CD4-positive, alpha-beta T cell (primary cell): ENCODE measurements at regions of chr7 and their contacts with region 1.

Region 1: DNA sequence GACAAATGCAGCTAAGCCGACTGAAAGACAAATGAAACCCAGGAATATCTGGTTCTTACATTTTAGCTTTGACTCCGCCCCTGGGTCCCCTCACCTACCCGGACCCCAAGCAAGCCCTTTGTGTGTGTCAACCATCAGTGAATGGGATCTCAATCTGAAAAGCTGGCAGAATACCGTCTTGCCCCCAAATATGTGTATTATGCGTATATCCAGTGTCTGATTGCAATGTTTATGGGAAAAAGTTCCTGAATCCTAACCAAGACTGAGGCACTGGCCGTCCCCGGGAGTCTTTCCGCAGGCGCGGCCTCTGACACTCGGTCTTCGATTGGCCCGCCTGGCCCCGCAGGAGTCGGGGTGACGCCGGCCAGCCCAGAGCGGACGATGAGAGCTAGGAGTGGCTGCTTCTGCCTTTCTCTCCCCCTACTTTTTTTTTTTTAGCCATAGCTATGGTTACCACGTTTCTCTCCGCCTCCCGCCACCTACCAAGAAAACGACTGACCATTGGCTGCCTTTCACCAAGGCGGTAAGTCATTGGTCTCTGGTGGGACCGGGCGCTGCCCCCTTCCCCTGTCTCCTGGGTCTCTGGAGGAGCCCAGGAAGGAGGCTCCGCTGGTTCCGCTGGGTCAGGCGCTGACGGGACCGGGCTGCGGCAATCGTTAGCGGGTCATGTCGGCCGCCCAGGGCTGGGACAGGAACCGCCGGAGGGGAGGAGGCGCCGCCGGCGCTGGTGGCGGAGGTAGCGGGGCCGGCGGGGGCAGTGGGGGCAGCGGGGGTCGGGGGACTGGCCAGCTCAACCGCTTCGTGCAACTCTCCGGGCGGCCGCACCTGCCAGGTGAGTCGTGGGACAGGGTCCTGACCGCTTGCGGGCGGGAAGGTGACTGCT is at the start of gene KLHDC10:
- DNase-seq: peak; percentile 90 to 99 (median 94)
- ATAC-seq: peak; percentile 94
- H3K4me3 ChIP-seq: peak within 1 kb of the TSS; percentile 82
- H3K4me3 Mint-ChIP-seq: peak within 1 kb of the TSS; percentile 96
- H3K27ac ChIP-seq: peak within 1 kb of the TSS; percentile 62 to 81
- H3K27ac Mint-ChIP-seq: peak within 1 kb of the TSS; percentile 86
- H3K4me1 ChIP-seq: peaks cover 22% of the 10 kb centered on the region
- H3K4me1 Mint-ChIP-seq: peaks cover 48% of the 10 kb centered on the region
- H3K27me3 ChIP-seq: no peaks in the 10 kb centered on the region
- H3K27me3 Mint-ChIP-seq: no peaks in the 10 kb centered on the region
- CTCF ChIP-seq: no peak
- total RNA-seq, gene KLHDC10: 7.0 to 8.8 TPM

Region 2: DNA sequence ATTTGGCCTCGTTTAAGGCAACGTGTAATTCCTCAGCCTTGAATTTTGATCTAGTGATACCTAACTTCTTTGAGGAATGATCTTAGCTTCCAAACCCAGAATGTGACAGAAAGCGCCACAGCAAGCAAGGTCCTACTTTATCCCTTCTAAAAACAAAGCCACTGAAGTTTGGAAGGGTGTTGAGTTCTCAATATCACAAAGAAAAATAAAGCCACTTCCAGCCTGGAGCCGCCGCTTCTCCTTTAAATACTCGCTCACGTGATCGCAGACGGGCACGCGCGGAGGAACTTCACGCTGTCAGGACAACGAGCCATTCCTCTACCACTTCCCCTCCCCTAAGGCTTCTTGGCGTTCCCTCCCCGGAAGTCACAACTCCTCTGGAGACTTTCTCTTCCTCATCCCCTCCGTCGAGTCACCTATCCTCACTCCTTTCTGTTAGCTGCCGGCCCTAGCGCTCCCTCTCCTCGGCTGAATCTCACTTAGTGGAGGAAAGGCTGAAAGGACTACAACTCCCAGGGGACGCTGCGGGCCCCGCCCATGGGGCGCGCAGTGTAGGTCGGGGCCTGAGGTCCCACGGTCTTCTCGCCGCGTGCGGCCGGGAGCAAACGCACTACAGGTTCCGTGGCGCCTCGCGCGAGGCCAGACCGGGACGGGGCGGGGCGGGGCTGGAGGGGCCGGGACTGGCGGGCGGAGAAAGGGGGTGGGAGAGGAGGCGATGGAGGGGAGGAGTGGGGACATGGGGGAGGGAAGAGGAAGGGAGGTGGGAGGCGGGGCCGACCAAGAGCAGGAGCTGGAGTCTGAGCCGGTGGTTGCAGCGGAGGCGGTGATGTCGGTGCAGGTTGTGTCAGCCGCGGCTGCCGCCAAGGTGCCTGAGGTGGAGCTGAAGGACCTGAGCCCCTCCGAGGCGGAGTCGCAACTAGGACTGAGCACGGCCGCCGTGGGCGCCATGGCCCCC is 845.7 kb before region 1 on chr7 and contains the start of gene AHCYL2:
- CTCF ChIA-PET with region 1: no interaction called
- POLR2A ChIA-PET with region 1: no interaction called
- intact Hi-C with region 1: loop called in 1 of 2 experiments (anchors 5 kb)
- DNase-seq: peak; percentile 96 to 99 (median 98)
- ATAC-seq: peak; percentile 89
- H3K4me3 ChIP-seq: peak within 1 kb of the TSS; percentile 91
- H3K4me3 Mint-ChIP-seq: peak within 1 kb of the TSS; percentile 96
- H3K27ac ChIP-seq: peak within 1 kb of the TSS; percentile 72 to 97
- H3K27ac Mint-ChIP-seq: peak within 1 kb of the TSS; percentile 89
- H3K4me1 ChIP-seq: peaks cover 25% of the 10 kb centered on the region
- H3K4me1 Mint-ChIP-seq: peaks cover 56% of the 10 kb centered on the region
- H3K27me3 ChIP-seq: no peaks in the 10 kb centered on the region
- H3K27me3 Mint-ChIP-seq: no peaks in the 10 kb centered on the region
- CTCF ChIP-seq: no peak
- total RNA-seq, gene AHCYL2: 5.8 to 6.0 TPM

Region 3: GRCh38 chr7:130050773-130051125 is 19.5 kb before region 1 on chr7:
- CTCF ChIA-PET with region 1: interaction called, 4 read pairs
- POLR2A ChIA-PET with region 1: interaction called, 14 read pairs
- intact Hi-C with region 1: loop called in 1 of 2 experiments (anchors 1 kb)
- DNase-seq: no peak
- ATAC-seq: no peak
- H3K4me3 ChIP-seq: peak overlapping the region; percentile 85
- H3K4me3 Mint-ChIP-seq: peak overlapping the region; percentile 98
- H3K27ac ChIP-seq: peak overlapping the region; percentile 29 to 45
- H3K27ac Mint-ChIP-seq: peak overlapping the region; percentile 81
- H3K4me1 ChIP-seq: peaks cover 15% of the 10 kb centered on the region
- H3K4me1 Mint-ChIP-seq: peaks cover 10% of the 10 kb centered on the region
- H3K27me3 ChIP-seq: no peaks in the 10 kb centered on the region
- H3K27me3 Mint-ChIP-seq: no peaks in the 10 kb centered on the region
- CTCF ChIP-seq: no peak

Region 4: DNA sequence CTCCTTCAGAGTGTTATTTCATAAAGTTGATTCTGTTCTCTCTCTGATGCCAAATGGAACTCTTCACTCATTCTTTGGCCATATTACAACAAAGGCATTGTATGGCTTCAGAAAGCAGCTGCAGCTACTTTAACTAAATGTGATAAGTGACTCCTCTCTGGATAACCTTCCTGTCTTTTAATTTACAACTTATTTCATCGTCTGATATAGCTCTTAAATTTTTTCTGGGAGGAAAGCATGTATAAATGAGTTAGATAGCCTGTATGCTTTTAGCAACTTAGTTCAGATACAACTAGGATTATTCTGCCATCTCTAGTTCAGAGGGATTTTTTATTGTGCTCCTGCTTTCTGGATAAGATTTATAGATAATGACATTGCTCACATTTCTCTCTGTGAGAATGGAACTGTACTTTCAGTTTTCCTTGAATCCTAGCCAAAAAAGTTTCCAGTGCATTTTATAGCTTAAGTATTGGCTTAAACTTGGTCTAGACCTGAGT is 57.6 kb after region 1 on chr7:
- CTCF ChIA-PET with region 1: no interaction called
- POLR2A ChIA-PET with region 1: no interaction called
- intact Hi-C with region 1: no loop called
- DNase-seq: no peak
- ATAC-seq: no peak
- H3K4me3 ChIP-seq: no peak overlapping the region
- H3K4me3 Mint-ChIP-seq: no peak overlapping the region
- H3K27ac ChIP-seq: no peak overlapping the region
- H3K27ac Mint-ChIP-seq: no peak overlapping the region
- H3K4me1 ChIP-seq: no peaks in the 10 kb centered on the region
- H3K4me1 Mint-ChIP-seq: no peaks in the 10 kb centered on the region
- H3K27me3 ChIP-seq: no peaks in the 10 kb centered on the region
- H3K27me3 Mint-ChIP-seq: no peaks in the 10 kb centered on the region
- CTCF ChIP-seq: no peak

Region 5: DNA sequence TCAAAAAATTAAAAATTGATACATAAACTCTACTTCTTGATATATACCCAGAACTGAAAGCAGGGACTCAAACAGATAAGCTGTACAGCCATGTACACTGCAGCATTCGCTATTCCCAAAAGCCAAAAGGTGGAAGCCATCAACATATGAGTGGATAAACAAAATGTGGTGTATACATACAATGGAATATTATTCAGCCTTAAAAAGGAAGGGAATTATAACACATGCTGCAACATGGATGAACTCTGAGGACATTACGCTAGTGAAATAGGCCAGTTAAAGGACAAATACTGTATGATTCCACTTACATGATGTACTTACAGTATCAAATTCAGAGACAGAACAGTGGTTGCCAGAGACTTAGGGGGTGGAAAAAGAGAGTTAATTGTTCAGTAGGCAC is 126.9 kb after region 1 on chr7:
- CTCF ChIA-PET with region 1: no interaction called
- POLR2A ChIA-PET with region 1: no interaction called
- intact Hi-C with region 1: no loop called
- DNase-seq: no peak
- ATAC-seq: no peak
- H3K4me3 ChIP-seq: no peak overlapping the region
- H3K4me3 Mint-ChIP-seq: no peak overlapping the region
- H3K27ac ChIP-seq: no peak overlapping the region
- H3K27ac Mint-ChIP-seq: no peak overlapping the region
- H3K4me1 ChIP-seq: no peaks in the 10 kb centered on the region
- H3K4me1 Mint-ChIP-seq: peaks cover 21% of the 10 kb centered on the region
- H3K27me3 ChIP-seq: no peaks in the 10 kb centered on the region
- H3K27me3 Mint-ChIP-seq: no peaks in the 10 kb centered on the region
- CTCF ChIP-seq: no peak

Region 6: DNA sequence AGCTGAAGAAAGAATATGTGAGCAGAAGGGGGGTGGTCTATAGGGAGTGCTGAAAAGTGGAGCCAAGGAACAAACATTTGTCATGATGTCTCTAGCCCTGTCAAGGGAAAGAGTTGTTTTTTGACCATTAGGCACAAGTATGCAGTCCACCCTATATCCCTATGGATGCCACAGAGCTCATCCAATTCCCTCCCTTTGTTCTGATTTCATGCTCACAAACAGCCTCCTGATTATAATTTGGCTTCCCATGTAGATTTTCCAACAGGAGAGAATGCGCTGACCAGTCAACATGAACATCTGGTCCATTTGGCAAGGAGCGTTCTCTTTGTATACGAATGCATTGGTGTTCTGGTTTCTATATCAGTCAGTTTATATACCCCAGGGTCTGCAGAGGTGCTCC is 382.7 kb after region 1 on chr7:
- CTCF ChIA-PET with region 1: no interaction called
- POLR2A ChIA-PET with region 1: no interaction called
- intact Hi-C with region 1: loop called in 1 of 2 experiments (anchors 5 kb)
- DNase-seq: no peak
- ATAC-seq: no peak
- H3K4me3 ChIP-seq: no peak overlapping the region
- H3K4me3 Mint-ChIP-seq: no peak overlapping the region
- H3K27ac ChIP-seq: no peak overlapping the region
- H3K27ac Mint-ChIP-seq: no peak overlapping the region
- H3K4me1 ChIP-seq: no peaks in the 10 kb centered on the region
- H3K4me1 Mint-ChIP-seq: peaks cover under 1% of the 10 kb centered on the region
- H3K27me3 ChIP-seq: no peaks in the 10 kb centered on the region
- H3K27me3 Mint-ChIP-seq: no peaks in the 10 kb centered on the region
- CTCF ChIP-seq: no peak

Region 7: GRCh38 chr7:130668257-130669084 is 598.3 kb after region 1 on chr7 and contains the start of gene COPG2:
- CTCF ChIA-PET with region 1: no interaction called
- POLR2A ChIA-PET with region 1: no interaction called
- intact Hi-C with region 1: loop called in 1 of 2 experiments (anchors 2 kb)
- DNase-seq: peak; percentile 21 to 85 (median 68)
- ATAC-seq: peak; percentile 77
- H3K4me3 ChIP-seq: peak within 1 kb of the TSS; percentile 83
- H3K4me3 Mint-ChIP-seq: peak within 1 kb of the TSS; percentile 95
- H3K27ac ChIP-seq: peak within 1 kb of the TSS; percentile 39 to 41
- H3K27ac Mint-ChIP-seq: peak within 1 kb of the TSS; percentile 82
- H3K4me1 ChIP-seq: peaks cover 13% of the 10 kb centered on the region
- H3K4me1 Mint-ChIP-seq: peaks cover 21% of the 10 kb centered on the region
- H3K27me3 ChIP-seq: no peaks in the 10 kb centered on the region
- H3K27me3 Mint-ChIP-seq: no peaks in the 10 kb centered on the region
- CTCF ChIP-seq: no peak
- total RNA-seq, gene COPG2: 4.1 to 4.3 TPM

Region 8: DNA sequence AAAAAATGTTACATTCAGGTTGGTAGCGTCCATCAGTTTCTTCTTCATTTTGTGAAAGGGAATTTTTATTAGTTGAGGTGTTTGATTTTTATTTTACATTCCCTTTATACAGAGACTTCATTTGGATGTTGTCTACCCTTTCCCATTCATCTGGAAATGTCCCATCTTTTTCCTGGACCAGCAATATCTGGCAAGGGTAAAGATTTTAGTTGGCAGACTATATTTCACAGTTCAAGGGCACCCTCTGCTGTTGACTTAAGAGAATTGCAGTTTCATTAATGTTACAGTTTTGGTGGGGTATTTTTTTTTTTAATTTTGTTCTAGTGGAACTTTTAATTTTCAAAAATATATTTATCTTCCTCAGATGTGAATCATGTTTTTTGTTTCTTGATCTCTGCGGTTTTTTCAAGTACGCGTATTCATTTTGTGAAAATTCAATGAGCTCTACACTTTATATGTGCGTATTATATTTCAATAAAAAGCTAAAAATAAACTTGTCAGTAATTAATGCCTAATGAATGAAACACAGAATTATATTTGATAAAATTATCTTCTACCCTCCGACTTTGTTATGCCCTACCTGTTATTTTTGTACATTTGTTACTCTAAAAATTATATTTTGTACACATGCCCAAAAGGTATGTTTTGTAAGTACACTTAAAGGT is 761.7 kb after region 1 on chr7:
- CTCF ChIA-PET with region 1: no interaction called
- POLR2A ChIA-PET with region 1: no interaction called
- intact Hi-C with region 1: loop called in 1 of 2 experiments (anchors 1 kb)
- DNase-seq: peak in 4 of 14 experiments; percentile 9 to 71 (median 50)
- ATAC-seq: no peak
- H3K4me3 ChIP-seq: no peak overlapping the region
- H3K4me3 Mint-ChIP-seq: no peak overlapping the region
- H3K27ac ChIP-seq: no peak overlapping the region
- H3K27ac Mint-ChIP-seq: no peak overlapping the region
- H3K4me1 ChIP-seq: no peaks in the 10 kb centered on the region
- H3K4me1 Mint-ChIP-seq: no peaks in the 10 kb centered on the region
- H3K27me3 ChIP-seq: no peaks in the 10 kb centered on the region
- H3K27me3 Mint-ChIP-seq: peaks cover 22% of the 10 kb centered on the region
- CTCF ChIP-seq: peak; percentile 89